Caco-2 (cell line): ENCODE measurements at regions of chr4 and their contacts with region 1.

Region 1: DNA sequence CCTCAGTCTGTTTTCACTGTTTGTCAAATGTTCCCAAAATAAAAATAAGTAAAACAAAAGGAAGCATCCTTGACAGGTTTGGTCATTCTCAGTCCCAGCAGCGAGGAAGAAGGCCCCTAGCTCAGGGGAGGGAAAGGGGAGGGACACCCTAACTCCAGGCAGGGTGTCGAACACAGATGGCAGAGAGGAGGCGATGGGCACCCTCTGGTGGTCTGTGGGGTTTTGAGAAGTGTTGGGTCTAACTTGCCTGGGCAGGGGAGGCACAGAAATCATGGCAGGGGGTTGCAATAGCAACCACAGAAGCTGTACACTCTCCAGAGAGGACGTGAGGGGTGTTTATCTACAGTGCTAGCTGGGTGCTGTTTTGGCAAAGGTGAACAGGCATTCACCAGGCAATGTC is 229.8 kb upstream of the SFRP2 start:
- DNase-seq: peak in 1 of 2 experiments; percentile 3
- H3K4me3 ChIP-seq: no peak overlapping the region
- H3K4me3 Mint-ChIP-seq: no peak overlapping the region
- H3K27ac Mint-ChIP-seq: no peak overlapping the region
- H3K4me1 ChIP-seq: no peaks in the 10 kb centered on the region
- H3K4me1 Mint-ChIP-seq: no peaks in the 10 kb centered on the region
- H3K27me3 ChIP-seq: no peaks in the 10 kb centered on the region
- H3K27me3 Mint-ChIP-seq: peaks cover 3% of the 10 kb centered on the region
- CTCF ChIP-seq: no peak

Region 2: DNA sequence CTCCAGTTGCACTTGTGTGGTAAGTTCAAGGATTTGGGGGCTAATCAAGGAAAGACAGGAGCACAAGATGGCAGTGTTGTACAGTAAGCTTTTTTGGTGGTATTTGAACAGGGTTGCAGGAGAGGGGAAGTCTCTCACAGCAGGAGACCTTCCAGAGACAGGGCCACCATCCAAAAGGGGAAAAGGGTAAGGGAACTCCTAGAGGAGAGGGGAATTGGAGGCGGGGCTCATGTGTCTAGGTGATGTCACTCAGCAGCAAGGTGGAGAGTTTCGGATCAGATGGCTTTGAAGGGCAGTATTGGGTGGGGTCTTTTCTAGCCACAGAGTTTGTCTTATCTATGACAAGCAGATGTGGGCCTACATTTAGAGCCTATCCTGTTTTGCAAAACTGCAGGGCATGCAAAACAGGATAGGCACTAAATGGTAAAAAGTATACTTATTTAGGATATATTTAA is 245.4 kb before region 1 on chr4:
- CTCF ChIA-PET with region 1: no interaction called
- POLR2A ChIA-PET with region 1: no interaction called
- intact Hi-C with region 1: loop called (anchors 2 kb)
- DNase-seq: no peak
- H3K4me3 ChIP-seq: no peak overlapping the region
- H3K4me3 Mint-ChIP-seq: no peak overlapping the region
- H3K27ac Mint-ChIP-seq: no peak overlapping the region
- H3K4me1 ChIP-seq: no peaks in the 10 kb centered on the region
- H3K4me1 Mint-ChIP-seq: no peaks in the 10 kb centered on the region
- H3K27me3 ChIP-seq: no peaks in the 10 kb centered on the region
- H3K27me3 Mint-ChIP-seq: peaks cover 23% of the 10 kb centered on the region
- CTCF ChIP-seq: peak in 1 of 2 experiments; percentile 39

Region 3: GRCh38 chr4:154292589-154292988 is 273.9 kb after region 1 on chr4:
- CTCF ChIA-PET with region 1: no interaction called
- POLR2A ChIA-PET with region 1: no interaction called
- intact Hi-C with region 1: no loop called
- DNase-seq: peak in 1 of 2 experiments; percentile 12
- H3K4me3 ChIP-seq: no peak overlapping the region
- H3K4me3 Mint-ChIP-seq: no peak overlapping the region
- H3K27ac Mint-ChIP-seq: no peak overlapping the region
- H3K4me1 ChIP-seq: no peaks in the 10 kb centered on the region
- H3K4me1 Mint-ChIP-seq: no peaks in the 10 kb centered on the region
- H3K27me3 ChIP-seq: no peaks in the 10 kb centered on the region
- H3K27me3 Mint-ChIP-seq: peaks cover 14% of the 10 kb centered on the region
- CTCF ChIP-seq: peak in 1 of 2 experiments; percentile 29